ENCODE measurements at regions of chr4 and their contacts with region 1.

Region 1: GRCh38 chr4:24488399-24489164 is 95.8 kb downstream of the DHX15 start:
- DNase-seq: peak; percentile 65
- H3K4me3 Mint-ChIP-seq: no peak overlapping the region
- H3K27ac Mint-ChIP-seq: no peak overlapping the region
- H3K4me1 Mint-ChIP-seq: no peaks in the 10 kb centered on the region
- H3K27me3 Mint-ChIP-seq: peaks cover 13% of the 10 kb centered on the region
- CTCF ChIP-seq: peak; percentile 85

Region 2: GRCh38 chr4:24363751-24364150 is 124.8 kb before region 1 on chr4:
- CTCF ChIA-PET with region 1: no interaction called
- POLR2A ChIA-PET with region 1: no interaction called
- intact Hi-C with region 1: no loop called
- DNase-seq: no peak
- H3K4me3 Mint-ChIP-seq: no peak overlapping the region
- H3K27ac Mint-ChIP-seq: no peak overlapping the region
- H3K4me1 Mint-ChIP-seq: no peaks in the 10 kb centered on the region
- H3K27me3 Mint-ChIP-seq: no peaks in the 10 kb centered on the region
- CTCF ChIP-seq: no peak

Region 3: DNA sequence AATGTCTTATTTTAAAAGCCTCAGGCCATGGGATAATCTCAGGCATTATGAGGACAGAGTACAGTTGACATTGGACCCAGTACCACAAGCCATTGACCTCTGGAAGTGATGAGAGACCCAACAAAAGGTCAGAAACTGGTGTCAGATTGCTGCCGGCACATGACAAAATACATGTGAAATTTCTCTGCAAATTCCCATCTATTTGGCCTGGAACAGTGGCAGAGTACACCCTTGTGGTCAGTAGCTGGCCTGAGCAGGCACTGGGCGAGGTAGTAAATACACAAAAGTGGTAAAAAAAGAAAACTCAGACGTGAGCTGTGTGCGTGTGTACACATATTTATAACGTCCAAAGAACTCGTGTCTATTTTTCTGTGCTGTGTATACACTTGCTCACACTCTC is 59.7 kb before region 1 on chr4:
- CTCF ChIA-PET with region 1: no interaction called
- POLR2A ChIA-PET with region 1: no interaction called
- intact Hi-C with region 1: no loop called
- DNase-seq: no peak
- H3K4me3 Mint-ChIP-seq: no peak overlapping the region
- H3K27ac Mint-ChIP-seq: no peak overlapping the region
- H3K4me1 Mint-ChIP-seq: no peaks in the 10 kb centered on the region
- H3K27me3 Mint-ChIP-seq: no peaks in the 10 kb centered on the region
- CTCF ChIP-seq: no peak

Region 4: DNA sequence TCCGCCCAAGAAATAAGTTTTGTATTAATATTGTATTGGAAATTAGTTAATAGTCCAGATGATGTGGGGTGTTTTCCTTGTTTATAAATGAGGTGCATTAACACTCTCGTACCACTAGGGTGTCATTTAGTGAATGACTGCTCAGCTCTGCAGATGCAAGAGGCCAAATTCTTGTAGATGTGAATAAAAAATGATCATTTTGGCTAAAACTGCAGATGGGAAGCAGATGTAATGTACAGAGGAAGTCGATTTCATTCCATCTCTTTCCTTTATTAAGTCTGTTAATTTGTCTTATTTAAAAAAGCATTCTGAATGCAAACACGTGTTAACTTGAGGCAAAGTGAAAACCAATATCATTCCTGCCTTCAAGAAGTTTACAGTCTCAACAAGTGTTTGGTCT is 12.3 kb before region 1 on chr4:
- CTCF ChIA-PET with region 1: interaction called, 18 read pairs
- POLR2A ChIA-PET with region 1: no interaction called
- intact Hi-C with region 1: no loop called
- DNase-seq: peak; percentile 29
- H3K4me3 Mint-ChIP-seq: no peak overlapping the region
- H3K27ac Mint-ChIP-seq: no peak overlapping the region
- H3K4me1 Mint-ChIP-seq: peaks cover 10% of the 10 kb centered on the region
- H3K27me3 Mint-ChIP-seq: peaks cover 30% of the 10 kb centered on the region
- CTCF ChIP-seq: peak; percentile 34

Region 5: GRCh38 chr4:24686871-24687680 is 198.5 kb after region 1 on chr4:
- CTCF ChIA-PET with region 1: no interaction called
- POLR2A ChIA-PET with region 1: no interaction called
- intact Hi-C with region 1: loop called (anchors 2 kb)
- DNase-seq: peak; percentile 52
- H3K4me3 Mint-ChIP-seq: no peak overlapping the region
- H3K27ac Mint-ChIP-seq: no peak overlapping the region
- H3K4me1 Mint-ChIP-seq: peaks cover 6% of the 10 kb centered on the region
- H3K27me3 Mint-ChIP-seq: peaks cover 13% of the 10 kb centered on the region
- CTCF ChIP-seq: peak; percentile 30

Region 6: DNA sequence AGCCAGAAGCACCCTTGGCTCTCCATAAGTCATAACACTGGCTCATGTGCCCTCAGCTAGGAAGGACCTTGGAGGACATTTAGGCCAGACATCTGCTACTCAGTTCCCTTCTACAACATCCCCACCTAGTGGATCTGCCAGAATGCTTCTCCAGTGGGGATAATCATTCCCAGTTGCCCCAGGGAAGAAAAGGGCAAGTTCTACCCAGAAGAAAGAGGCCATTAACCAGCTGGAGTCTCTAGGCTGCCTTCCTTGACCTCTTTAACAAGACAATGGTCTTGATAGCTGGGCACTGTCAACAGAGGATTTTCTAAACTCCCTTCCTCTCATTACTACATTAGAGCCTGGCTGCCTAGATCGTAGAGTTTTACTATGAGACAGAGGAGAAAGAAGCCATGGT is 500.2 kb after region 1 on chr4:
- CTCF ChIA-PET with region 1: no interaction called
- POLR2A ChIA-PET with region 1: no interaction called
- intact Hi-C with region 1: loop called (anchors 2 kb)
- DNase-seq: peak; percentile 59
- H3K4me3 Mint-ChIP-seq: no peak overlapping the region
- H3K27ac Mint-ChIP-seq: no peak overlapping the region
- H3K4me1 Mint-ChIP-seq: no peaks in the 10 kb centered on the region
- H3K27me3 Mint-ChIP-seq: no peaks in the 10 kb centered on the region
- CTCF ChIP-seq: peak; percentile 26